Ovary (tissue), 10 donors: ENCODE measurements at regions of chr7 and their contacts with region 1.

Region 1: GRCh38 chr7:542713-543500 is 23.3 kb upstream of the PDGFA start:
- DNase-seq: no peak
- H3K4me3 ChIP-seq: no peak overlapping the region
- H3K27ac ChIP-seq: no peak overlapping the region
- H3K4me1 ChIP-seq: peaks cover under 1% of the 10 kb centered on the region
- H3K27me3 ChIP-seq: no peaks in the 10 kb centered on the region
- CTCF ChIP-seq: no peak
- EP300 ChIP-seq: no peak
- POLR2A ChIP-seq: no peak

Region 2: DNA sequence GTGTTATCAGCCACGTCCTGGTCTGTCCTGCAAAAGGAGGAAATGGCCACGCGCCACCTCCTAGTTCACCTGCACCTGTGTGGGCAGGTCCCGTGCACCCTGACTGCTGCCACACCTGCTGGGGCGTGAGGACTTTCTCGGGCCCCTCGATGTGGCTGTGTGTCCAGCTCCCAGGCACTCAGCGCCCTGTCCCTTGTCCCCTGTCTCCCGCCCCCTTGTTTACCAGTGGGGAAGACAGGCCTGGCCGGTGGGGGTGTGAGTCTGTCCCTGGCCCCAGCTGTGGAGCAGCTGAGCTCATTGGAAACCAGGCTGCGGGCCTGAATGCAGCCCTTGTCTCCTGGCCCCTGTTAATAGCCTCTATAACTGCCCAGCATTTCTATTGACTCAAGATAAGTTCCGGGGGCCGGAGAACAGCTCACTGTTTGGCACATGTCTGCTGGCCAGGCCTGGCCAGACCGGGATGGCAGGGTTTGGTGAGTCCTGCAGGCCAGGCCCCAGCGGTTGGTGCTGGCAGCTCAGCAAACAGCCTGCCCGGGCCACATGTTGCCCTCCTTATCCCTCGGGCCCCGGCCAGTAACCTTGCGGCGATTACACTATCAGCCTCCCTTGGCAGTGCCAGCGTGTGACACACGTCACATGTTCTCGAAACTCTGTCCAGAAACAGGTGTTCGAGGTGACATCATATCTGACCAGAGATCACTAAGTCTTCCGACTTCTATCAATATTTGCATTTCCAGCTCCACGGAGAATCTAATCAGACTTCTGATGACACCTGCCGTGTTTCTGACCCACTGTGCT is 200.9 kb before region 1 on chr7:
- intact Hi-C with region 1: loop called in 1 of 4 experiments (anchors 10 kb)
- DNase-seq: no peak
- H3K4me3 ChIP-seq: no peak overlapping the region
- H3K27ac ChIP-seq: no peak overlapping the region
- H3K4me1 ChIP-seq: no peaks in the 10 kb centered on the region
- H3K27me3 ChIP-seq: no peaks in the 10 kb centered on the region
- CTCF ChIP-seq: no peak
- EP300 ChIP-seq: no peak
- POLR2A ChIP-seq: no peak

Region 3: GRCh38 chr7:1290026-1290678 is 747.2 kb after region 1 on chr7:
- intact Hi-C with region 1: loop called in 1 of 4 experiments (anchors 10 kb)
- DNase-seq: peak in 1 of 5 donors; percentile 46
- H3K4me3 ChIP-seq: no peak overlapping the region
- H3K27ac ChIP-seq: no peak overlapping the region
- H3K4me1 ChIP-seq: peaks cover 2% of the 10 kb centered on the region
- H3K27me3 ChIP-seq: no peaks in the 10 kb centered on the region
- CTCF ChIP-seq: no peak
- EP300 ChIP-seq: no peak
- POLR2A ChIP-seq: no peak